Left cardiac atrium (tissue), 4 donors: ENCODE measurements at regions of chr6 and their contacts with region 1.

Region 1: GRCh38 chr6:157597446-157598312 is 216.7 kb downstream of the ZDHHC14 start:
- DNase-seq: peak; percentile 49
- ATAC-seq: peak; percentile 71 to 77

Region 2: DNA sequence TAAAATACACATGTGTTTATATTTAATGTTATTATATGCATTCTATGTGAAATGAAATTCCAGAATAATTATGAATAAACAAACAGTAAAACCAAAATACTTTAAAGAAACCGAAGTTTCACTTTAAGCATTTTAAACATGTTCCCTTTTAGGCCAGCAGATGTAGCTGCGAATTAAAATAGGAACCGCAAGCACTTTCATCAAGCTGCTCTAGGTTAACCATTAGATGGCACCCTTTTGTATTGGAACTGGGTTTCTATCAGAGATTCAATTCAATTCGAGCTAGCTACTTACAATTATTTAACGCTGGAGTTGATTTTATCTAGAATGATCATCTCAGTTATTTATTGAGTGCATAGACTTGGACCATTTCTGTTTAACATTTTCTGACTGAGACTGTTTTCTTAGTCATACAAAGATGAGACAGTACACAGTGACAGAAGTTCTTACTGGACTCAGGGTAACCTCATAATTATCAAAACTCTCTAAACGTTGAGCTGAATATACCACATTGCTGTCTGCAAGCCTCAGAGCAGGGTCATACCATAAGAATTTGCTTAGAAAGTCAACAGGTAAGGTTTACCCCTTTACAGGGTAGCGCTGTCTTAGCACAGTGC is 282.9 kb before region 1 on chr6:
- intact Hi-C with region 1: loop called (anchors 5 to 10 kb)
- DNase-seq: no peak
- ATAC-seq: peak; percentile 50 to 87

Region 3: DNA sequence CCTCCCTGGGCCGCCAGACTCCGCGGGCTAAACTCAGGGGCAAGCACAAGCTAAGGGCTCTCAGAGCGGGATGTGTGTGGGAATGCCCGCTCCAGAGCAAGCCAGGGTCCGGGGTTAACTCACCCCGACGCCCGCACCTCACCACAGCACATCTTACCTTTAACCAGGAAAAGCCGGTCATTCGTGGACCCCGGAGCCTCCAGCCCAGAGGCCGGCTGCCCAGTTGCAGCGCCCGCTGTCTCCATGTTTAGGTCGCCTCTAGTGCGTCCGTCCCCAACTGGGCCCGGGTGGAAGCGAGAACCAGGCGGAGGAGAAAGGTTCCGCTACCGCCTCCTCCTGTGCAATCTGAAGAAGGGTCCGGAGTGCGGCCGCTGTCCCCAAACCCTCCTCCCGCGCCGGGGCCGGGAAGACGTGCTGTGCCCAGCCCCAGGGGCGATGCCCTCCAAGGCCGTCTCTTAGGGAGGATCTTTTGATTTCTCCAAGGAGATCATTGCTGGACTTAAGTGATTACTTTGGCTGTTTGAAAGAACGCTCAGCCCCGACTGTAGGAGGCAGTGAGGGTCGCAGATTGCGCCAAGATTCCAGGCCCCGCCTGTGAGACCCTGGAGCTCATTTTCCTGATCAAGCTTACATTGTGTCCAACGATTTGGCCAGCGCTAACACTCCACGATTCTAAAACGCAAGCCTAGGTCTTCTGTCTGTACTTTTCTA is 274.3 kb before region 1 on chr6 and contains the start of gene TMEM242:
- intact Hi-C with region 1: loop called (anchors 5 to 10 kb)
- DNase-seq: peak; percentile 91
- ATAC-seq: peak; percentile 94 to 96
- total RNA-seq, gene TMEM242: 12.4 to 14.5 TPM

Region 4: GRCh38 chr6:157682931-157683403 is 85.3 kb after region 1 on chr6:
- intact Hi-C with region 1: no loop called
- DNase-seq: no peak
- ATAC-seq: peak; percentile 34 to 63